Naive thymus-derived CD4-positive, alpha-beta T cell (primary cell): ENCODE measurements at regions of chr1 and their contacts with region 1.

Region 1: GRCh38 chr1:25469177-25469576 is 38.5 kb downstream of the MACO1 start:
- DNase-seq: no peak
- ATAC-seq: no peak
- H3K4me3 ChIP-seq: no peak overlapping the region
- H3K4me3 Mint-ChIP-seq: no peak overlapping the region
- H3K27ac ChIP-seq: no peak overlapping the region
- H3K27ac Mint-ChIP-seq: peak overlapping the region in 1 of 9 donors; percentile 50
- H3K4me1 ChIP-seq: peaks cover 9 to 43% of the 10 kb centered on the region in 2 donors
- H3K4me1 Mint-ChIP-seq: peaks cover 28 to 78% (median 70%) of the 10 kb centered on the region in 7 donors
- H3K27me3 ChIP-seq: no peaks in the 10 kb centered on the region
- H3K27me3 Mint-ChIP-seq: no peaks in the 10 kb centered on the region

Region 2: GRCh38 chr1:25253911-25254310 is 215.3 kb before region 1 on chr1:
- CTCF ChIA-PET with region 1: no interaction called
- POLR2A ChIA-PET with region 1: no interaction called
- intact Hi-C with region 1: no loop called
- DNase-seq: no peak
- ATAC-seq: no peak
- H3K4me3 ChIP-seq: no peak overlapping the region
- H3K4me3 Mint-ChIP-seq: no peak overlapping the region
- H3K27ac ChIP-seq: no peak overlapping the region
- H3K27ac Mint-ChIP-seq: peak overlapping the region in 1 of 9 donors; percentile 9
- H3K4me1 ChIP-seq: no peaks in the 10 kb centered on the region
- H3K4me1 Mint-ChIP-seq: peaks cover 0 to 16% (median 5%) of the 10 kb centered on the region in 7 donors
- H3K27me3 ChIP-seq: no peaks in the 10 kb centered on the region
- H3K27me3 Mint-ChIP-seq: no peaks in the 10 kb centered on the region

Region 3: GRCh38 chr1:25451908-25452307 is 17.3 kb before region 1 on chr1:
- CTCF ChIA-PET with region 1: interaction called, 3 read pairs
- POLR2A ChIA-PET with region 1: no interaction called
- intact Hi-C with region 1: loop called in 1 of 2 experiments (anchors 2 kb)
- DNase-seq: no peak
- ATAC-seq: no peak
- H3K4me3 ChIP-seq: no peak overlapping the region
- H3K4me3 Mint-ChIP-seq: no peak overlapping the region
- H3K27ac ChIP-seq: no peak overlapping the region
- H3K27ac Mint-ChIP-seq: peak overlapping the region in 2 of 9 donors; percentile 8 to 46
- H3K4me1 ChIP-seq: no peaks in the 10 kb centered on the region
- H3K4me1 Mint-ChIP-seq: peaks cover 0 to 18% (median 4%) of the 10 kb centered on the region in 7 donors
- H3K27me3 ChIP-seq: no peaks in the 10 kb centered on the region
- H3K27me3 Mint-ChIP-seq: no peaks in the 10 kb centered on the region